Mammary epithelial cell (primary cell): ENCODE measurements at regions of chr15 and their contacts with region 1.

Region 1: GRCh38 chr15:59372352-59373211 is at the start of gene MYO1E:
- DNase-seq: peak; percentile 98
- H3K4me3 ChIP-seq: peak within 1 kb of the TSS; percentile 77 to 98 (median 90)
- H3K27ac ChIP-seq: peak within 1 kb of the TSS; percentile 95
- H3K4me1 ChIP-seq: peaks cover 27% of the 10 kb centered on the region
- H3K27me3 ChIP-seq: no peaks in the 10 kb centered on the region
- CTCF ChIP-seq: no peak
- total RNA-seq, gene MYO1E: 205 to 298 TPM

Region 2: DNA sequence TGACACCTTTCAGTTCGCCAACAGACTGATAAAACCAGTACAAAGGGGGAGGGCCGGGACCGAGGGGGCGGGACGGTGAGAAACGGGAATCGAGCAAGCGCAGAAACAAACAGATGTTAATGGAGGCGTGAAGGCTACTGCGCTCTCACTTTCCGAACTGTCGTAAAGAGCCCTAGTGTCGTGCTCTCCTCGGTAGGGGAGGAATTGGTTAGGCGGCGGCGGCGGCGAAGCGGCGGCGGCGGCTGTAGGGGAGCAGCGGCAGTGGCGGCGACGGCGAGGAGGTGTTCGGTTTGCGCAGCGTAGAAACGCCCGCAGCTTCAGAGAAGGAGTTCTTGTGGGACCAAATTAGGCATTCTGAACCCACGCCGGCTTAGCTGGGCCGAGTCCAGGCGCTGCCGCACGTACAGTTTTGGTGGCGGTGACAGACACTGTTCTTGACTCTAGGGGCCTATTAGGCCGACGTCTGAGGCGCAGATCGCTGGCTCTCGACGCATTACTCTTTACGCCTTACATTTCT is 385.0 kb before region 1 on chr15 and contains the start of gene RNF111:
- CTCF ChIA-PET with region 1: no interaction called
- dilution Hi-C with region 1: no loop called
- in situ Hi-C with region 1: no loop called
- intact Hi-C with region 1: loop called (anchors 10 kb)
- DNase-seq: peak; percentile 95
- H3K4me3 ChIP-seq: peak within 1 kb of the TSS; percentile 67 to 95 (median 89)
- H3K27ac ChIP-seq: peak within 1 kb of the TSS; percentile 75
- H3K4me1 ChIP-seq: peaks cover 11% of the 10 kb centered on the region
- H3K27me3 ChIP-seq: no peaks in the 10 kb centered on the region
- CTCF ChIP-seq: no peak
- total RNA-seq, gene RNF111: 22.0 to 30.7 TPM

Region 3: DNA sequence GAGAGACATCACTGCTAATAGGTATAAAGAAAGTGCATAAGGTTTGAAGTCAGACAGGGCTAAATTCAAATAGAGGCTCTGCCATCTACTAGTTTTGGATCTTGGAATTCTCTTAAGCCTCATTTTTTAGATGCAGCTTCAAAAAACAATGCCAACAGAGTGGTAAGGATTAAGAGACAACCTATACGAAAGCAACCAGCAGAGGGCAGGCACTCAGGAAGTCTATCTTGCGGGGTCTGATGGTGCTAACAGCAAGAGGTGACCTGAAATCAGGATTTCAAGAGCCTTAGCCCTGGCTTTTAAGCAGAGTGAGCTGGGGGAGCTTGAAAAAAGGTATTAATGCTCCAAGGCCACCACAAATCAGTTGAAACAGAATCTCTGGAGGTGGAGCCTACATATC is 125.2 kb before region 1 on chr15:
- CTCF ChIA-PET with region 1: no interaction called
- dilution Hi-C with region 1: no loop called
- in situ Hi-C with region 1: no loop called
- intact Hi-C with region 1: loop called (anchors 1 kb)
- DNase-seq: peak; percentile 35
- H3K4me3 ChIP-seq: no peak overlapping the region
- H3K27ac ChIP-seq: no peak overlapping the region
- H3K4me1 ChIP-seq: no peaks in the 10 kb centered on the region
- H3K27me3 ChIP-seq: no peaks in the 10 kb centered on the region
- CTCF ChIP-seq: peak; percentile 62 to 68

Region 4: DNA sequence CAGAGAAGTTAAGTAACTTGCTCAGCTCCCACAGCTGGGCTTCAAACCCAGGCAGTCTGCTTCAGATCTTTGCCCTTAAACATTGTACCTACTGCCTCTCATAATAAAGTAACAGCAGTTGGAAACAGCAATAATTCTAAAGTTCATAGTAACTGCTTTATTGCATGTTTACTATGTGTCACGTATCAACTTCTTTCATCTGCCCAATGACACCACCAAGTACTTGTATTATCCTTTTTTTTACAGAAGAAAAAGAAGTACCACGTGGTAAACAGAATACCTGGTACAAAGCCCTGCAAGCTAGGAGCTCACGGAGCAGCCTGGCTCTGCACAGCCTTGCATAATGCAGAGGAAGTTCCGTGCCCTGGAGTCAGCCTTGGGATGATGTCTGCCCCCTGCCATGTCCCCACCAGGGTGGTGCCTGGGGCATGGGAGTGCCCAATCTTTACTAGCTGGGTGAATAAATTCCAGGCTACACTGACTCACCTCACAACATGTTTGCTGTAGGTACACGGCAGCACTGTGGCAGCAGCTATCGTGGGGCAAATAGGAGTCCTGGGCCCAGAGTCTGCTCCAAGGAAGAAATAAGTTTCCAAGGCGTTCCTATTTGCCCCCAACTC is 88.8 kb before region 1 on chr15:
- CTCF ChIA-PET with region 1: no interaction called
- dilution Hi-C with region 1: no loop called
- in situ Hi-C with region 1: no loop called
- intact Hi-C with region 1: loop called (anchors 5 kb)
- DNase-seq: peak; percentile 97
- H3K4me3 ChIP-seq: no peak overlapping the region
- H3K27ac ChIP-seq: peak overlapping the region; percentile 97
- H3K4me1 ChIP-seq: peaks cover 53% of the 10 kb centered on the region
- H3K27me3 ChIP-seq: no peaks in the 10 kb centered on the region
- CTCF ChIP-seq: peak in 1 of 2 donors; percentile 1

Region 5: DNA sequence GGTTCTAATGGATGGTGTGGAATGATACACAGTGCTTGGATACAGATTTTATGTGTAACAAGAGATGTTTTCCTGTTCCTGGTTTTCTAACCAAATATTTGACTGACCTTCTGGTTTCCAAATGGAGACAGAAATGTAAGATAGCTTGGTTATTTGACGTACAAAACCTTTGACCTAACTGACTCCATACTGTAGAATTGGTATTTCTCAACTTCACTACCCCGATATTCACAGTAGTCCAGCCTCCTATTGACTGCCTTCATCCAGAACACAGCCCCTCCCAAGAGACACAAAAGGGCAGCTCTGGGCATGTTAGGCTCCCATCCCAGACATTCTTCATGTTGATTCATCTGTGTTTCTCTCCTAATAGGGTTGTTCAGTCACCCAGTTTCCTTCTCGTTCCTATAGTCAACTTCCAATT is 33.3 kb before region 1 on chr15:
- CTCF ChIA-PET with region 1: no interaction called
- dilution Hi-C with region 1: no loop called
- in situ Hi-C with region 1: no loop called
- intact Hi-C with region 1: loop called (anchors 5 kb)
- DNase-seq: peak; percentile 94
- H3K4me3 ChIP-seq: no peak overlapping the region
- H3K27ac ChIP-seq: peak overlapping the region; percentile 90
- H3K4me1 ChIP-seq: peaks cover 33% of the 10 kb centered on the region
- H3K27me3 ChIP-seq: no peaks in the 10 kb centered on the region
- CTCF ChIP-seq: no peak